ENCODE measurements at regions of chr7 and their contacts with region 1.

Region 1: GRCh38 chr7:149071641-149072437 is 18.7 kb downstream of the ZNF786 start:
- DNase-seq: peak in 8 of 9 donors; percentile 31 to 57 (median 46)
- ATAC-seq: peak; percentile 90
- H3K4me3 ChIP-seq: no peak overlapping the region
- H3K4me3 Mint-ChIP-seq: peak overlapping the region in 5 of 10 donors; percentile 16 to 51 (median 35)
- H3K27ac ChIP-seq: peak overlapping the region; percentile 58
- H3K27ac Mint-ChIP-seq: peak overlapping the region in 7 of 9 donors; percentile 25 to 81 (median 76)
- H3K4me1 ChIP-seq: no peaks in the 10 kb centered on the region
- H3K4me1 Mint-ChIP-seq: peaks cover 8 to 32% (median 15%) of the 10 kb centered on the region in 7 donors
- H3K27me3 ChIP-seq: no peaks in the 10 kb centered on the region
- H3K27me3 Mint-ChIP-seq: no peaks in the 10 kb centered on the region

Region 2: GRCh38 chr7:149102666-149103065 is 30.8 kb after region 1 on chr7:
- CTCF ChIA-PET with region 1: no interaction called
- POLR2A ChIA-PET with region 1: no interaction called
- intact Hi-C with region 1: loop called in 1 of 2 experiments (anchors 1 kb)
- DNase-seq: no peak
- ATAC-seq: no peak
- H3K4me3 ChIP-seq: no peak overlapping the region
- H3K4me3 Mint-ChIP-seq: no peak overlapping the region
- H3K27ac ChIP-seq: no peak overlapping the region
- H3K27ac Mint-ChIP-seq: peak overlapping the region in 1 of 9 donors; percentile 1
- H3K4me1 ChIP-seq: no peaks in the 10 kb centered on the region
- H3K4me1 Mint-ChIP-seq: no peaks in the 10 kb centered on the region
- H3K27me3 ChIP-seq: no peaks in the 10 kb centered on the region
- H3K27me3 Mint-ChIP-seq: no peaks in the 10 kb centered on the region